ENCODE measurements at regions of chrX and their contacts with region 1.

Region 1: DNA sequence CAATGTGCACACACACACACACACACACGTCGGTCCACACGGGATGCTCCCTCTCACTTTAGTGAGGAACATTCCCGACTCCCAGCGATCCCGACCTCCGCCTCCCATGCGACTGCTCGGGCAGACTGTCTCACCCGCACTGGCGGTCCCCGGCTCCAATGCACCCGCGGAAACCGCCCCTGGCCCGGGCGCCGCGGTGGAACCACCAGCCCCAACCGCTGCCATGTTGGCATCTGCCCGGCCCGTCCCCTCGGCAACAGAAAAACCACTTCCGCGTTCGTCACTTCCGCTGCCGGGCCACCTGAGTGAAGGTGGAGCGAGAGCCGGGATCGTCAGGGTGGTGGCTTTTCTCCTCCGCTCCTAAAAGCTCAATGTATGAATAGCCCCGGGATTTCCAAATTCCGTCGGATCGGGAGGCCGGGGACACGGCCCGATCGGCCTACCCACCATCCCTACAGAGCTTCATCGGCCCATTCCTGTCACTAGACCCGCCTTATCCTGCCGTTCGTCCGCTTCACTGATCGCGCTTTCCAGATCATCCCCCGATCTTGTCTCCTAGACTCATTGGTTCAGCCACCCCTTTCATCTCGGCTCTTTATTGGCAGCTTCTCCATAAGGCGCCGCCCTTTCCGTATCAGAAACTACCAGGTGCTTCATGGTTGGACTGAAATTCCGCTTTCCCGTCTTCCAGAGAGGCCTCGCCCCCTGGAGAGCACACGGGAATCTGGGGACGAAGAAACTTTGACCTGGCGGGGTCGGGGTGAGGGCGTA is at the start of gene SLC35A2:
- DNase-seq: no peak
- ATAC-seq: peak; percentile 86
- H3K4me3 ChIP-seq: peak within 1 kb of the TSS; percentile 62
- H3K27ac ChIP-seq: peak within 1 kb of the TSS; percentile 68
- H3K4me1 ChIP-seq: no peaks in the 10 kb centered on the region
- H3K27me3 ChIP-seq: no peaks in the 10 kb centered on the region
- CTCF ChIP-seq: no peak
- EP300 ChIP-seq: no peak
- POLR2A ChIP-seq: peak; percentile 89; the same call in 1 of the 2 replicates
- RAD21 ChIP-seq: no peak
- polyA plus RNA-seq, gene SLC35A2: 2.1 to 6.8 TPM

Region 2: GRCh38 chrX:48696301-48697181 is 215.1 kb before region 1 on chrX and contains the start of gene SUV39H1:
- CTCF ChIA-PET with region 1: no interaction called
- POLR2A ChIA-PET with region 1: no interaction called
- RAD21 ChIA-PET with region 1: no interaction called
- SMC1A ChIA-PET with region 1: no interaction called
- in situ Hi-C with region 1: no loop called
- intact Hi-C with region 1: loop called (anchors 5 kb)
- DNase-seq: peak; percentile 45
- ATAC-seq: peak; percentile 98
- H3K4me3 ChIP-seq: peak within 1 kb of the TSS; percentile 58
- H3K27ac ChIP-seq: peak within 1 kb of the TSS; percentile 77
- H3K4me1 ChIP-seq: peaks cover 6% of the 10 kb centered on the region
- H3K27me3 ChIP-seq: no peaks in the 10 kb centered on the region
- CTCF ChIP-seq: no peak
- EP300 ChIP-seq: no peak
- POLR2A ChIP-seq: peak; percentile 89
- RAD21 ChIP-seq: no peak
- polyA plus RNA-seq, gene SUV39H1: 4.9 to 5.7 TPM

Region 3: DNA sequence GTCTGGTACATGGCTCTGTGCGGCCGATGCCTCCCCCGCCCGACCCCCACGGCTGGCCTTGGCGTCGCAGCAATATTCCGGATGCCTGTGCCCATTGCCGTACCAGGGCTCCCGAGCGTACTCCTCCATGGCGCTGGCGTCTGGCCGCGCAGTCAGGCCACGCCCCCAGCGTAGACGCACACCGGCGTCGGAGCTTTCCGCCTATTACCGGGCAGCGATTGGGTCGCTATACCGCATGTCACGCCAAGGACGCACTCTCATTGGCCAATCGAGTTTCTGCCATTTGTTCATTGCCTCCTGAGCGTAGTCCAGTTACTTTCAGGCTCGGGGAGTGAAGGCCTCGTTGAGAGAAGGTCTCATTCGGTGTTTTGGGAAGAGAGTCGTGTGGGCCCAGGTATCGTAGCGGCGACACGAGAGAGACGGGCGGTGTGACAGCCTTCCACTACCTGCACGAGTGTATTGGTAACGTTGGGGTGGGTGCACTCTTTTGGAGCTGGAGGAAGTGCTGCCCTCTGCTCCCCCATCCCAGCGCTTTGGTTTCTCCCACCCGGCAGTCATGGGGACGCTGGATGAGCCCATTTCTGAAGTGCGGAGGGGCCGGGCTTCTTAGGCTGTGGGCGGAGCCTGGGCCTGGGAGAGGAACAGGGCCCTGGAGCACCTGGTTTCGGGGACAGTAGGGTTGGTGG is 13.8 kb before region 1 on chrX and contains the starts of genes PQBP1 and TIMM17B:
- CTCF ChIA-PET with region 1: interaction called, 3 read pairs
- POLR2A ChIA-PET with region 1: interaction called, 15 read pairs
- RAD21 ChIA-PET with region 1: interaction called, 12 read pairs
- SMC1A ChIA-PET with region 1: interaction called, 3 read pairs
- in situ Hi-C with region 1: no loop called
- intact Hi-C with region 1: no loop called
- DNase-seq: peak; percentile 92
- ATAC-seq: peak; percentile 94
- H3K4me3 ChIP-seq: peak within 1 kb of the TSS; percentile 77
- H3K27ac ChIP-seq: peak within 1 kb of the TSS; percentile 93
- H3K4me1 ChIP-seq: no peaks in the 10 kb centered on the region
- H3K27me3 ChIP-seq: no peaks in the 10 kb centered on the region
- CTCF ChIP-seq: no peak
- EP300 ChIP-seq: no peak
- POLR2A ChIP-seq: peak; percentile 86
- RAD21 ChIP-seq: no peak
- polyA plus RNA-seq, gene PQBP1: 12.5 to 28.0 TPM
- polyA plus RNA-seq, gene TIMM17B: 4.5 to 18.3 TPM

Region 4: GRCh38 chrX:48945516-48946348 is 34.1 kb after region 1 on chrX:
- CTCF ChIA-PET with region 1: interaction called, 7 read pairs
- POLR2A ChIA-PET with region 1: no interaction called
- RAD21 ChIA-PET with region 1: interaction called, 5 read pairs
- SMC1A ChIA-PET with region 1: interaction called, 4 read pairs
- in situ Hi-C with region 1: no loop called
- intact Hi-C with region 1: loop called (anchors 5 kb)
- DNase-seq: no peak
- ATAC-seq: peak; percentile 82
- H3K4me3 ChIP-seq: no peak overlapping the region
- H3K27ac ChIP-seq: no peak overlapping the region
- H3K4me1 ChIP-seq: peaks cover 13% of the 10 kb centered on the region
- H3K27me3 ChIP-seq: no peaks in the 10 kb centered on the region
- CTCF ChIP-seq: peak; percentile 88 to 93 (median 91)
- EP300 ChIP-seq: no peak
- POLR2A ChIP-seq: no peak
- RAD21 ChIP-seq: peak; percentile 94

Region 5: DNA sequence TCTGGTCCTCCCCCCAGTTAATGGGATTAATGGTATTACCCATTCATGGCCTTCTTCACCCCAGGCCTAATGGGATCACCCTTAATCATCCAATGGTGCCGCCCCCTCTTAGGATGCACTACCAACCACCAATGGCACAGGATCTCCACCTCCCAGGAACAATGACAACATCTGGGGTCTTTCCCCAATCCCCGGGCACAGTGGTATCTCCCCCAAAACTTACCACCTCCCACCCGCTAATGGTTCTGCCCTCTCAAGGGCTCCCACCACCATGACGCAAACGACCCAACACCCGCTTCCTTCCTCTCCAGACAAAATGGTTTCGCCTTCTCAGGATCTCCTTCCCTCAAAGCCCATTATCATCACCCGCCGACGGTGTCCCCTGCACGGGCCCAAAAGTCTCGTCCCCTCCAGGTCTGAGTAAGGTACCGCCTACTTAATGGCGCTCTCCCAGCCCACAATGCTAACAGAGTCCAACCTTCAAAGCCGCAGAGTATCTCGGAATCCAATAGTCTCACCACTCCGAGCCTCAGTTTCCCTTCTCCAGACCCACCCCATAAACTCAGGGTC is 90.0 kb after region 1 on chrX:
- CTCF ChIA-PET with region 1: no interaction called
- POLR2A ChIA-PET with region 1: no interaction called
- RAD21 ChIA-PET with region 1: no interaction called
- SMC1A ChIA-PET with region 1: no interaction called
- in situ Hi-C with region 1: no loop called
- intact Hi-C with region 1: no loop called
- DNase-seq: peak; percentile 12
- ATAC-seq: peak; percentile 80
- H3K4me3 ChIP-seq: peak overlapping the region; percentile 62
- H3K27ac ChIP-seq: peak overlapping the region; percentile 87
- H3K4me1 ChIP-seq: no peaks in the 10 kb centered on the region; the same call in none of the 2 replicates
- H3K27me3 ChIP-seq: no peaks in the 10 kb centered on the region
- CTCF ChIP-seq: no peak
- EP300 ChIP-seq: no peak
- POLR2A ChIP-seq: no peak
- RAD21 ChIP-seq: no peak

Region 6: GRCh38 chrX:49089336-49089952 is 177.8 kb after region 1 on chrX:
- CTCF ChIA-PET with region 1: no interaction called
- POLR2A ChIA-PET with region 1: no interaction called
- RAD21 ChIA-PET with region 1: no interaction called
- SMC1A ChIA-PET with region 1: no interaction called
- in situ Hi-C with region 1: no loop called
- intact Hi-C with region 1: no loop called
- DNase-seq: no peak
- ATAC-seq: no peak
- H3K4me3 ChIP-seq: no peak overlapping the region
- H3K27ac ChIP-seq: no peak overlapping the region
- H3K4me1 ChIP-seq: no peaks in the 10 kb centered on the region
- H3K27me3 ChIP-seq: no peaks in the 10 kb centered on the region
- CTCF ChIP-seq: no peak
- EP300 ChIP-seq: no peak
- POLR2A ChIP-seq: no peak
- RAD21 ChIP-seq: no peak